ENCODE measurements at regions of chr5 and their contacts with region 1.

Region 1: GRCh38 chr5:90783460-90784333 is 225.1 kb downstream of the ADGRV1 start:
- DNase-seq: peak; percentile 24 to 39
- ATAC-seq: peak; percentile 47 to 69
- H3K4me3 ChIP-seq: no peak overlapping the region
- H3K27ac ChIP-seq: no peak overlapping the region
- H3K4me1 ChIP-seq: no peaks in the 10 kb centered on the region
- H3K27me3 ChIP-seq: no peaks in the 10 kb centered on the region
- CTCF ChIP-seq: peak; percentile 41 to 86 (median 57)
- POLR2A ChIP-seq: no peak

Region 2: DNA sequence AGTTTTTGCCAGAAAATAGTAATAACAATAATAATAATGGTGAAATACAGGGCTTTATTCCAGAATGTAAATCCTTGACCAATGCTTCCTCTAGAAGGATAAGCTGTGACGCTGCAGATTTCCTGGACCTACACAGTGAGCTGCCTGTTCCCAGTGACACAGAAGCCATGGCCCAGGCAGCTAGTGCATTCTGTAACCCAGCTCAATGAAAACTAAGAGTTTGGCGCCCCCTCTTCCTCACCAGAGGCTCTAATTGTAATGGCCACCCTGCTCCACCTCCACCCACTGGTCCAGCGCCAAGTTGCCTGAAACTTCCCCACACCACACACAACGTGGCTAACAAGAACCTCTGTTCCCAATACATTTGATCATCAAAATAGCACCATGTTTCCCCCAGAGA is 622.3 kb before region 1 on chr5:
- in situ Hi-C with region 1: no loop called
- intact Hi-C with region 1: no loop called
- DNase-seq: peak; percentile 4 to 14
- ATAC-seq: no peak
- H3K4me3 ChIP-seq: no peak overlapping the region
- H3K27ac ChIP-seq: no peak overlapping the region
- H3K4me1 ChIP-seq: no peaks in the 10 kb centered on the region
- H3K27me3 ChIP-seq: no peaks in the 10 kb centered on the region
- CTCF ChIP-seq: no peak
- POLR2A ChIP-seq: no peak

Region 3: GRCh38 chr5:90434116-90434714 is 349.5 kb before region 1 on chr5:
- in situ Hi-C with region 1: loop called in 3 of 4 experiments (anchors 10 to 25 kb)
- intact Hi-C with region 1: loop called (anchors 5 kb)
- DNase-seq: no peak
- ATAC-seq: no peak
- H3K4me3 ChIP-seq: no peak overlapping the region
- H3K27ac ChIP-seq: no peak overlapping the region
- H3K4me1 ChIP-seq: no peaks in the 10 kb centered on the region
- H3K27me3 ChIP-seq: no peaks in the 10 kb centered on the region
- CTCF ChIP-seq: peak in 3 of 5 experiments; percentile 16 to 56 (median 40)
- POLR2A ChIP-seq: no peak

Region 4: GRCh38 chr5:90446961-90447360 is 336.7 kb before region 1 on chr5:
- in situ Hi-C with region 1: loop called in 3 of 4 experiments (anchors 10 to 25 kb)
- intact Hi-C with region 1: no loop called
- DNase-seq: no peak
- ATAC-seq: no peak
- H3K4me3 ChIP-seq: no peak overlapping the region
- H3K27ac ChIP-seq: no peak overlapping the region
- H3K4me1 ChIP-seq: no peaks in the 10 kb centered on the region
- H3K27me3 ChIP-seq: no peaks in the 10 kb centered on the region
- CTCF ChIP-seq: no peak
- POLR2A ChIP-seq: no peak

Region 5: DNA sequence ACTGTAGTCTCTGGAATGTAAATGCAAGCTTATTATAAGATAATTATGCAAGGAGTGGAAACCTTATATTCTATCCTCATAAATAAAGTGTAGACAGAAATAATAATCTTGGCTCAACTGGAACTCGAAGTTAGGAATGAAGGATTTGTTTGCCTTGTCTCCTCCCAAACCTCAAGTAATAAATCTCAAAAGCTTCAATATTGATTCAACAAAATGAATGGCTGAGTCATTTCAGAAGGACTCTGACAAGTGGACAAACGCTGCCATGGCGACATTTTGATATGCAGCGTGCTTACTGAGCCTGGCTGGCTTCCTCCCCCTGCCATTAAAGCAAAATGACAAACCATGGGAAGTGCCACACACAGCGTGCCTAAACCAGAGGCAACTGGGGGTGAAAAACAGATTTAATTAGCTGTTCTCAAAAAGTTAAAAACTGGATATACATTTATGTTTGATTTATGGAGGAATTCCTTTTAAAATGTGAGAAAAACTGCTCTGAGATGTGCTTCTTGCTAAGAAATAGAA is 235.6 kb before region 1 on chr5:
- in situ Hi-C with region 1: no loop called
- intact Hi-C with region 1: no loop called
- DNase-seq: no peak
- ATAC-seq: peak in 1 of 2 donors; percentile 36
- H3K4me3 ChIP-seq: no peak overlapping the region
- H3K27ac ChIP-seq: no peak overlapping the region
- H3K4me1 ChIP-seq: no peaks in the 10 kb centered on the region
- H3K27me3 ChIP-seq: no peaks in the 10 kb centered on the region
- CTCF ChIP-seq: no peak
- POLR2A ChIP-seq: no peak

Region 6: GRCh38 chr5:90709323-90710155 is 74.2 kb before region 1 on chr5:
- in situ Hi-C with region 1: no loop called
- intact Hi-C with region 1: loop called (anchors 2 kb)
- DNase-seq: no peak
- ATAC-seq: no peak
- H3K4me3 ChIP-seq: no peak overlapping the region
- H3K27ac ChIP-seq: no peak overlapping the region
- H3K4me1 ChIP-seq: no peaks in the 10 kb centered on the region
- H3K27me3 ChIP-seq: no peaks in the 10 kb centered on the region
- CTCF ChIP-seq: peak in 2 of 5 experiments; percentile 32 to 48
- POLR2A ChIP-seq: no peak

Region 7: GRCh38 chr5:90747175-90747574 is 36.5 kb before region 1 on chr5:
- in situ Hi-C with region 1: no loop called
- intact Hi-C with region 1: no loop called
- DNase-seq: no peak
- ATAC-seq: no peak
- H3K4me3 ChIP-seq: no peak overlapping the region
- H3K27ac ChIP-seq: no peak overlapping the region
- H3K4me1 ChIP-seq: no peaks in the 10 kb centered on the region
- H3K27me3 ChIP-seq: no peaks in the 10 kb centered on the region
- CTCF ChIP-seq: no peak
- POLR2A ChIP-seq: no peak

Measured in gastrocnemius medialis (tissue), 4 donors.